Right cardiac atrium (tissue), 5 donors: ENCODE measurements at regions of chr4 and their contacts with region 1.

Region 1: DNA sequence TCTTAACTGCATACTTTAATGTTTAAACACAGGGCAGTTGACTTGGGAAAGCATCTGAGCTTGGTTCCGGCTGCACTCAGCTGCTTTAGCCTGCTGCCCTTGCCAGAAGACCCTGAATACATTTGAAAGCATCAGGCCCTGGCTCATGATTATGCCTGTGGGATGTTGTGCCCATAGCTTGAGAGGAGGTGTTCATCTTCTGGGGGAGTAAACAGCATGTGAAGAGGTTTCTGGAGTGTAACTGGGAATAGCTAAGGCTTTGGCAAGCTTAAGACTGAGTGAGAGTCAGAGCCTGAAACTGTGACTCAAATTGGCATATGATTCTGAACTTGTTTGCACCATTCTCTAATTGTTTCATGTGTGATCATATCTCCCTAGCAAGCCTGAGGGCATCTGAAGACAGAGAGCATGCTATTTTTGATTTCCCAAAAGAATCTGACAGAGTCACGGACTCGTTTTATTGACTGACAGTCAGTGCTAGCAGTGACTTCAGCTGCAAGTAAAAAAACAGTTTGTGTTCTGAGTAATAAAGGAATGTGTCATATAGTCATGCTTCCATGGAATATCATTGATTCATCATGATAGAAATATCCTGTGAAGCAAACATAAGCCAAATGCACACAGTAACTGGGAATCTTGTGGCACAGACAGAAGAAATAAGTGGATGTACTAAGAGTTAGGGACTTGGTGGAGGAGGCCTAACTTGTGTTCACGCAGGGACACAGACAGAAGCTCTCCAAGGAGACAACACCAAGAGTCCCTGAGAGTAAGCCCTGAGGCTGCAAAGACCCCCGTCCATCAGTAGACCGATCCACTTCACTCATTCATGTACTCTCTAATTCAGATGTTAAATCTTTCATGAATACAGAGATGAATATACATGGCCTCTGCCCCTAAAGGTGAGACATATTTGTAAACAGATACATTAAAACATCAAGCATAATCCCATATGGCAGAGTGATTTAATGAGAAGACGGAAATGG is 100.7 kb downstream of the SYNPO2 start:
- DNase-seq: no peak
- ATAC-seq: peak; percentile 44 to 69
- H3K4me3 ChIP-seq: no peak overlapping the region
- H3K27ac ChIP-seq: peak overlapping the region; percentile 90
- H3K4me1 ChIP-seq: peaks cover 14% of the 10 kb centered on the region
- H3K27me3 ChIP-seq: no peaks in the 10 kb centered on the region

Region 2: GRCh38 chr4:119286377-119287002 is 297.1 kb after region 1 on chr4:
- intact Hi-C with region 1: loop called (anchors 5 kb)
- DNase-seq: peak in 1 of 3 donors; percentile 30
- ATAC-seq: peak in 1 of 2 donors; percentile 54
- H3K4me3 ChIP-seq: no peak overlapping the region
- H3K27ac ChIP-seq: no peak overlapping the region
- H3K4me1 ChIP-seq: no peaks in the 10 kb centered on the region
- H3K27me3 ChIP-seq: no peaks in the 10 kb centered on the region